Stomach (tissue), 19 donors: ENCODE measurements at regions of chr17 and their contacts with region 1.

Region 1: GRCh38 chr17:64420143-64420971 is 28.6 kb upstream of the MILR1 start:
- DNase-seq: peak in 1 of 2 donors; percentile 87
- H3K4me3 ChIP-seq: no peak overlapping the region
- H3K27ac ChIP-seq: no peak overlapping the region
- H3K4me1 ChIP-seq: peaks cover 0 to 14% (median 5%) of the 10 kb centered on the region in 4 donors
- H3K27me3 ChIP-seq: no peaks in the 10 kb centered on the region
- CTCF ChIP-seq: peak in 5 of 7 experiments; percentile 38 to 77 (median 66)
- EP300 ChIP-seq: no peak
- POLR2A ChIP-seq: no peak

Region 2: DNA sequence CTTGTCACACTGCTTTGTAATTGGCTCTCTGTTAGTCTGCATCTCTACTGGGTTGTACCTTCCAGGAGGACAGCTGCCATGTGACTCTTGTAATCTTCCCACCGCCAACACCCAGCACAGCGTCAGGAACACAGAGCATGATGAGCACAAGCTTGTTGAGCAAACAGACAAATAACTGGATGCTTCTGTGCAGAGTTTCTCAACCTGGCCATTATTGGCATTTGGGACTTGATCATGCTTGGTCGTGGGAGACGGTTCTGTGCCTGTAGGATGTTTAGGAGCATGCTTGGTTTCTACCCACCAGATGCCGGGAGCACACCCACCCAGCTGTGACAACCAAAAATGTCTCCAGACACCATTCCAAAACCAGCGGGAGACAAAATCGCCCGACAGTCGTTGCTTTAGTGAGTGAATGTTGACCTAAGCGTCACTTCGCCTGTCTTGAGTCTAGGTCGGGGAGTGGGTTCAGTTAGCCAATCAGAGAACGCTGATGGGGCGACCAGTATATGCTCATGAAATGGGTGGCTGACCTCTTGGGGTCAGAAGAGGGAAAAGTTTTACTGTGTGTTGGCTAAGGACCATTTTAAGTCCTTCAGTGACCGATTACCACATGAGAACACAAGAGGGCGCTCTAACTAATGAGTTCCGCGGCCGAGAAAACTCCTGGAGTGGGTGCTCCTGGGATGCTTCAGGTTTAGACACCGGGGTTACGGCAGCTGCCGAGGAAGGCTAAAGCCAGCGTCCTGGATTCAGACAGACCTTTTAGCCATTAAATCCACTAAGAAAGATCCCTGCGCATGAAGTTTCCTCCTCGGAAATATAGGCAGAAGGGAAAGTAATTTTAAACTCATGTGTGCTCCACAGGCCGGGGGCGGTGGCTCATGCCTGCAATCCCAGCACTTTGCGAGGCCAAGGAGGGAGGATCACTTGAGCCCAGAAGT is 99.5 kb before region 1 on chr17:
- intact Hi-C with region 1: loop called (anchors 5 kb)
- DNase-seq: peak; percentile 73 to 84
- H3K4me3 ChIP-seq: no peak overlapping the region
- H3K27ac ChIP-seq: peak overlapping the region in 1 of 5 donors; percentile 30
- H3K4me1 ChIP-seq: peaks cover 0 to 16% (median 7%) of the 10 kb centered on the region in 4 donors
- H3K27me3 ChIP-seq: peaks cover 0 to 10% (median 0%) of the 10 kb centered on the region in 3 donors
- CTCF ChIP-seq: peak in 5 of 7 experiments; percentile 44 to 79 (median 62)
- EP300 ChIP-seq: no peak
- POLR2A ChIP-seq: no peak

Region 3: GRCh38 chr17:64488301-64488700 is 67.9 kb after region 1 on chr17:
- intact Hi-C with region 1: loop called (anchors 5 kb)
- DNase-seq: no peak
- H3K4me3 ChIP-seq: no peak overlapping the region
- H3K27ac ChIP-seq: no peak overlapping the region
- H3K4me1 ChIP-seq: no peaks in the 10 kb centered on the region
- H3K27me3 ChIP-seq: no peaks in the 10 kb centered on the region
- CTCF ChIP-seq: no peak
- EP300 ChIP-seq: no peak
- POLR2A ChIP-seq: no peak